Head of caudate nucleus (tissue), 42 donors: ENCODE measurements at regions of chr9 and their contacts with region 1.

Region 1: GRCh38 chr9:97710356-97711222 is 13.4 kb upstream of the XPA start:
- DNase-seq: peak in 36 of 42 donors; percentile 20 to 80 (median 52)

Region 2: DNA sequence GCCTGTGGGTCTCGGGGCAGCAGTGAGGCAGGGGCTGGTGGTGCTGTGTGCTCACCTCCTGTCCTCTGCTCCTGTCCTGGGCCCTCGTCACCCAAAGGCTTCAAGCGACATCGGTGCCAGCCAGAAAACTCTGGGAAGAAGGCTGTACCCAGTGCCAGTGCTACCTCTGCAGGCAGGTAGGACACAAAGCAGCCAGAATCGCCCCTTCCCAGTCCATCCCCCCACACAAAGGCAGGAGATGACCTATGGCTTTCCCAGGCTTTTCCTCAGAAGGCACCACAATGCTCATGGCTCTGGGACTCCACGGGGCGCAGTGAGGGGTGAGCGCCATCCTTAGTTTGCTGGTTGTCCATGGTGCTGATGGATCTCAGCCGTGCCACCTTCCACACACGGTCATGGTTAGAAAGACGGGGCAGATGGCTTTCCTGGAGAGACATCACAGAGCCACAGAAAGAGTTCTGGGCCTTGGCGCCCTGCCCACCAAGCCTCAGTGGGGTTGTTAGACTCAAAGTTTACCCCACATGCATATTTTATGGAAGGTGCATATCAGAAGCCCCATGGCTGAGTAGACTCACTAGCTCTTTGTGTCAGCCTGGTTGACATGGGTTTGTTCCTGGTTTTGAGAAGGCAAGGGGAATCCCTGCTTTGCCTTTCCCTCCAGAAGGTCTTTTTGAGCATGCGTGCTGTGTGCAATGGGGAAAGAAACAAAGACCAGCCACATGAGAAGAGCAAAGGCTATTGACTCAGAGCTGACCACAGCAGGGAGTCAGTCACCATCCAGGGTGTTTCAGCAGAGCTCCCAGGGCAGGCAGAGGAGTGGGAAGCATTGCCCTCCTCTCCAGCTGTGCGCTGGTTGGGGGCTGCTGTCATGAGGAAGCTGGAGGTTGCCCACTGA is 348.1 kb before region 1 on chr9:
- intact Hi-C with region 1: no loop called
- DNase-seq: peak in 1 of 42 donors; percentile 27

Region 3: DNA sequence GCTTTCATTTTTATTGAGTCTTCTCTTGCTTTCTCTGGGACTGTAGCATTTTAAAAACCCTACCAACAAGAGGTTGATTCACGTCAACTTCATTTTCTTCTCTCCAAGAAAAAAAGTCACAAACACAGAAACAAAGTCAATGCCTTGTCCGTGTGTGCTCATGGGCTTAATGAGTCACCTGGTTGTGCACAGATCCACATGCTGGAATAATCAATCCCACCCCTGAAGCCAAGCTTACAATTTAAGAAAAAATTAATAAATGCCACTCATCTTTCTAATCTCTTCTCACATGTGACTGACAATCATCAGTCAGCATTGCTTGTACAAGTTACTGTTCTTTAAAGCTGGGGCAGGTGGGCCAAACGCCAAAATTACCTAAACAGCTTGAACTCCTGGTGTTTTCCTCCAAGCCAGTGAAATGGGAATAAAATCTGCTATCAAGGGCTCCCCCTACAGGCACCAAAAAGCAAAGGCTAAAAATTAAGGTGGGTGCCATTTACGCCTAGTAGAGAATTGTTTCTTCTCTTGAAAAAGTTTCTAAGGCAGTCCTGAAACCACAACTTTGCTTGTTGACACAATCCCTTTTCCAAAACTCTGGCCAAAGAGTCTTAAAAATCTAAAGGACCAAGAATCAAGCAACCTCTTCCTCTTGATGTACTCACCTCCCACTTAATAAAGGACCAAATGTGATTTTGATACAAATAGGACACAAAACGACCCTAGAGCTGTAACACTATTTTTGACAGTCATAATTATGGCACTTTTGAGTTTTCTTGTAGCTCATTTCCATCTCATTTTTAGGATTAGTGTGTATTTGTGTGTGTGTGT is 190.4 kb after region 1 on chr9:
- intact Hi-C with region 1: loop called (anchors 5 kb)
- DNase-seq: peak in 13 of 42 donors; percentile 26 to 74 (median 35)